ENCODE measurements at regions of chr19 and their contacts with region 1.

Region 1: GRCh38 chr19:9857920-9858746 is 23.0 kb downstream of the PIN1 start:
- DNase-seq: peak; percentile 36
- H3K4me3 Mint-ChIP-seq: peak overlapping the region; percentile 77
- H3K27ac Mint-ChIP-seq: peak overlapping the region; percentile 95
- H3K4me1 Mint-ChIP-seq: peaks cover 65% of the 10 kb centered on the region
- H3K27me3 Mint-ChIP-seq: no peaks in the 10 kb centered on the region

Region 2: DNA sequence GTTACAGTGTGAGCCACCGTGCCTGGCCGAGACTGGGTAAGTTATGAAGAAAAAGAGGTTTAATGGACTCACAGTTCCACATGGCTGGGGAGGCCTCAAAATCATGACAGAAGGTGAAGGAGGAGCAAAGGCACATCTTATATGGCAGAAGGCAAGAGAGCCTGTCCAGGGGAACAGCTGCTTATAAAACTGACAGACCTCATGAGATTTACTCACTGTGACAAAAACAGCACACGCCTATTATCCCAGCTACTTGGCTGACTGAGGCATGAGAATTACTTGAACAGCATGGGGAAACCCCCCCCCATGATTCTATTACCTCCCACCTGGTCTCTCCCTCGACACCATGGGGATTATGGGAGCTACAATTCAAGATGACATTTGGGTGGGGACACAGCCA is 213.7 kb before region 1 on chr19:
- CTCF ChIA-PET with region 1: no interaction called
- POLR2A ChIA-PET with region 1: no interaction called
- DNase-seq: no peak
- H3K4me3 Mint-ChIP-seq: no peak overlapping the region
- H3K27ac Mint-ChIP-seq: no peak overlapping the region
- H3K4me1 Mint-ChIP-seq: no peaks in the 10 kb centered on the region
- H3K27me3 Mint-ChIP-seq: no peaks in the 10 kb centered on the region

Region 3: DNA sequence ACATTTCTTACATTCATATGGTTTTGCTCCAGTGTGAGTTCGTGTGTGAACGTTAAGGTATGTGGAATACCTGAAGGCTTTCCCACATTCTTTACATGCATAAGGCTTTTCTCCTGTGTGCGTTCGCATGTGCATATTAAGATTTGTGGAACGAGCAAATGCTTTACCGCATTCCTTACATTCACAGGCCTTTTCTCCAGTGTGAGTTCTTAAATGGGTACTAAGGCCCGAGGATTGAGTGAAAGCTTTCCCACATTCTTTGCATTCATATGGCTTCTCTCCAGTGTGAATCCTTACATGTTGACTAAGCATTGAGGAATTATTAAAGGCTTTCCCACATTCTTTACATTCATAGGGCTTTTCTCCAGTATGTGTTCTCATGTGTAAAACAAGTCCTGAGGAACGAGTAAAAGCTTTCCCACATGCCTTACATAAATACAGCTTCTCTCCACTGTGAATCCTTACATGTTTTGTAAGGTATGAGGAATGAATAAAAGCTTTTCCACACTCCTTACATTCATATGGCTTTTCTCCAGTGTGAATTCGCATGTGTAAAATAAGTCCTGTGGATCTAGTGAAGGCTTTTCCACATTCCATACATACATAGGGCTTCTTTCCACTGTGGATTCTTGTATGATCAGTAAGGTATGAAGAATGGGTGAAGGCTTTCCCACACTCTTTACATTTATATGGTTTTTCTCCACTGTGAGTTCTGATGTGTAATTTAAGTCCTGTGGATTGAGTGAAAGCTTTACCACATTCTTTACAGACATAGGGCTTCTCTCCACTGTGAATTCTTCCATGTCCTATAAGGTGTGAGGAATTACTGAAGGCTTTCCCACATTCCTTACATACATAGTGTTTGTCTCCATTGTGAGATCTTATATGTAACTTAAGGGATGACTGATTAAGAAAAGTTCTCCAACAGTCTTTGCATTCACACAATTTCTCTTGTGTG is 100.3 kb before region 1 on chr19:
- CTCF ChIA-PET with region 1: no interaction called
- POLR2A ChIA-PET with region 1: no interaction called
- DNase-seq: no peak
- H3K4me3 Mint-ChIP-seq: no peak overlapping the region
- H3K27ac Mint-ChIP-seq: no peak overlapping the region
- H3K4me1 Mint-ChIP-seq: no peaks in the 10 kb centered on the region
- H3K27me3 Mint-ChIP-seq: no peaks in the 10 kb centered on the region

Region 4: GRCh38 chr19:9834726-9835506 is 23.2 kb before region 1 on chr19 and contains the start of gene PIN1:
- CTCF ChIA-PET with region 1: no interaction called
- POLR2A ChIA-PET with region 1: interaction called, 22 read pairs
- DNase-seq: peak; percentile 99
- H3K4me3 Mint-ChIP-seq: peak within 1 kb of the TSS; percentile 90
- H3K27ac Mint-ChIP-seq: peak within 1 kb of the TSS; percentile 81
- H3K4me1 Mint-ChIP-seq: peaks cover 28% of the 10 kb centered on the region
- H3K27me3 Mint-ChIP-seq: no peaks in the 10 kb centered on the region
- total RNA-seq, gene PIN1: 96.0 to 97.0 TPM

Measured in activated CD4-positive, alpha-beta memory T cell treated with anti-CD3 and anti-CD28 coated beads, Interleukin-2, amount 10 ng/mL, durations not matched to agents 7 days and 5 days (primary cell).